ENCODE measurements at regions of chr9 and their contacts with region 1.

Region 1: GRCh38 chr9:137034863-137035761 is 3.2 kb upstream of the FUT7 start:
- DNase-seq: peak; percentile 85 to 87 (median 85)
- H3K4me3 ChIP-seq: peak overlapping the region; percentile 34 to 42
- H3K4me3 Mint-ChIP-seq: peak overlapping the region; percentile 73 to 85 (median 80)
- H3K27ac ChIP-seq: peak overlapping the region; percentile 60
- H3K27ac Mint-ChIP-seq: peak overlapping the region; percentile 69 to 91 (median 84)
- H3K4me1 ChIP-seq: peaks cover 50% of the 10 kb centered on the region
- H3K4me1 Mint-ChIP-seq: peaks cover 20 to 46% (median 33%) of the 10 kb centered on the region in 4 donors
- H3K27me3 ChIP-seq: no peaks in the 10 kb centered on the region
- H3K27me3 Mint-ChIP-seq: no peaks in the 10 kb centered on the region

Region 2: GRCh38 chr9:136777359-136777758 is 257.8 kb before region 1 on chr9:
- CTCF ChIA-PET with region 1: interaction called, 11 read pairs
- POLR2A ChIA-PET with region 1: no interaction called
- intact Hi-C with region 1: no loop called
- DNase-seq: no peak
- H3K4me3 ChIP-seq: no peak overlapping the region
- H3K4me3 Mint-ChIP-seq: no peak overlapping the region
- H3K27ac ChIP-seq: no peak overlapping the region
- H3K27ac Mint-ChIP-seq: no peak overlapping the region
- H3K4me1 ChIP-seq: no peaks in the 10 kb centered on the region
- H3K4me1 Mint-ChIP-seq: peaks cover 0 to 5% (median 0%) of the 10 kb centered on the region in 4 donors
- H3K27me3 ChIP-seq: no peaks in the 10 kb centered on the region
- H3K27me3 Mint-ChIP-seq: peaks cover 10 to 14% of the 10 kb centered on the region in 2 donors

Region 3: GRCh38 chr9:136849038-136849959 is 185.8 kb before region 1 on chr9 and contains the start of gene PHPT1:
- CTCF ChIA-PET with region 1: interaction called, 36 read pairs
- POLR2A ChIA-PET with region 1: no interaction called
- intact Hi-C with region 1: no loop called
- DNase-seq: peak; percentile 96 to 99 (median 97)
- H3K4me3 ChIP-seq: peak within 1 kb of the TSS; percentile 54 to 85
- H3K4me3 Mint-ChIP-seq: peak within 1 kb of the TSS; percentile 89 to 94 (median 92)
- H3K27ac ChIP-seq: peak within 1 kb of the TSS; percentile 47
- H3K27ac Mint-ChIP-seq: peak within 1 kb of the TSS; percentile 77 to 96 (median 93)
- H3K4me1 ChIP-seq: peaks cover 26% of the 10 kb centered on the region
- H3K4me1 Mint-ChIP-seq: peaks cover 7 to 27% (median 12%) of the 10 kb centered on the region in 4 donors
- H3K27me3 ChIP-seq: no peaks in the 10 kb centered on the region
- H3K27me3 Mint-ChIP-seq: peaks cover 3 to 10% of the 10 kb centered on the region in 2 donors
- total RNA-seq, gene PHPT1: 41.3 to 42.6 TPM

Region 4: DNA sequence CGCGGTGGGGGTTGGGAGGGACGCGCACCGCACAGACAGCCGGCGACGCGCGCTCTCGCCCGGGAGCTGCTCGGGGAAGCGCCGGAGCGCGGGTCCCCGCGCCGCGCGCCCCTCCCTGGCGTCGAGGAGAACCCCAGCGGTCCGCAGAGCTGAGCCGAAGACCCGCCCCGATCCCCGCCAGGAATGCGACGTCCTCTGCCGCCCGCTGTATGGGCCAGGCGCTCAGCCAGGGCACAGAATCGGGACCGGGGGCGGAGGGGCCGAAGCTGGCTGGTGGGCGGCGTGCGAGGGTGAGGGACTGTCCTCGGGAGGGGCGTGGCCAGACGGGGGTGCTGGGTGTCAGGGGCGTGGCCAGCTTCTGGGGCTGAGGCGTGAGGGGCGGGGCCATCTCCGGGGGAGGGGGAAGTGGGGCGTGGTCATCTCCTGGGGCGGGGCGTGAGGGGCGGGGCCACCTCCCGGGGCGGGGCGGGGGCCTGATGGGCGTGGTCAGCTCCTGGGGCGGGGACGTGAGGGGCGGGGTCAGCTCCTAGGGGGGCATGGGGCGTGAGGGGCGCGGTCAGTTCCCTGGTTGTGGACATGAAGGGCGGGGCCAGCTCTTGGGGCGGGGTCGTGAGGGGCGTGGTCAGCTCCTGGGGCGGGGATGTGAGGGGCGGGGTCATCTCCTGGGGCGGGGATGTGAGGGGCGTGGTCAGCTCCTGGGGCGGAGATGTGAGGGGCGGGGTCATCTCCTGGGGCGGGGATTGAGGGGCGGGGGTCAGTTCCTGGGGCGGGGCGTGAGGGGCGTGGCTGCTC is 56.8 kb before region 1 on chr9:
- CTCF ChIA-PET with region 1: interaction called, 11 read pairs
- POLR2A ChIA-PET with region 1: interaction called, 7 read pairs
- intact Hi-C with region 1: no loop called
- DNase-seq: peak; percentile 66 to 81 (median 69)
- H3K4me3 ChIP-seq: peak overlapping the region in 1 of 2 donors; percentile 9
- H3K4me3 Mint-ChIP-seq: peak overlapping the region in 5 of 8 donors; percentile 24 to 61 (median 47)
- H3K27ac ChIP-seq: peak overlapping the region; percentile 2
- H3K27ac Mint-ChIP-seq: no peak overlapping the region
- H3K4me1 ChIP-seq: peaks cover 41% of the 10 kb centered on the region
- H3K4me1 Mint-ChIP-seq: peaks cover 11 to 32% (median 23%) of the 10 kb centered on the region in 4 donors
- H3K27me3 ChIP-seq: no peaks in the 10 kb centered on the region
- H3K27me3 Mint-ChIP-seq: no peaks in the 10 kb centered on the region

Region 5: GRCh38 chr9:137021979-137022619 is 13.0 kb before region 1 on chr9:
- CTCF ChIA-PET with region 1: interaction called, 43 read pairs
- POLR2A ChIA-PET with region 1: interaction called, 18 read pairs
- intact Hi-C with region 1: no loop called
- DNase-seq: peak; percentile 60 to 83 (median 63)
- H3K4me3 ChIP-seq: no peak overlapping the region
- H3K4me3 Mint-ChIP-seq: peak overlapping the region in 1 of 8 donors; percentile 72
- H3K27ac ChIP-seq: peak overlapping the region; percentile 15
- H3K27ac Mint-ChIP-seq: peak overlapping the region; percentile 15 to 89 (median 79)
- H3K4me1 ChIP-seq: peaks cover 20% of the 10 kb centered on the region
- H3K4me1 Mint-ChIP-seq: peaks cover 1 to 16% (median 8%) of the 10 kb centered on the region in 4 donors
- H3K27me3 ChIP-seq: no peaks in the 10 kb centered on the region
- H3K27me3 Mint-ChIP-seq: no peaks in the 10 kb centered on the region

Region 6: GRCh38 chr9:137070201-137070905 is 35.2 kb after region 1 on chr9 and contains the start of gene SAPCD2:
- CTCF ChIA-PET with region 1: interaction called, 30 read pairs
- POLR2A ChIA-PET with region 1: interaction called, 8 read pairs
- intact Hi-C with region 1: no loop called
- DNase-seq: peak; percentile 86 to 91 (median 87)
- H3K4me3 ChIP-seq: peak within 1 kb of the TSS in 1 of 2 donors; percentile 57
- H3K4me3 Mint-ChIP-seq: peak within 1 kb of the TSS; percentile 59 to 86 (median 75)
- H3K27ac ChIP-seq: no peak within 1 kb of the TSS
- H3K27ac Mint-ChIP-seq: peak within 1 kb of the TSS in 5 of 7 donors; percentile 47 to 91 (median 82)
- H3K4me1 ChIP-seq: peaks cover 21% of the 10 kb centered on the region
- H3K4me1 Mint-ChIP-seq: peaks cover 4 to 17% (median 11%) of the 10 kb centered on the region in 4 donors
- H3K27me3 ChIP-seq: no peaks in the 10 kb centered on the region
- H3K27me3 Mint-ChIP-seq: peaks cover 0 to 4% of the 10 kb centered on the region in 2 donors
- total RNA-seq, gene SAPCD2: 0.09 to 0.11 TPM